CD4-positive, alpha-beta T cell (primary cell): ENCODE measurements at regions of chr1 and their contacts with region 1.

Region 1: GRCh38 chr1:182629499-182630096 is 25.4 kb upstream of the RGS16 start:
- DNase-seq: peak in 12 of 14 experiments; percentile 11 to 82 (median 39)
- ATAC-seq: peak; percentile 88
- H3K4me3 ChIP-seq: no peak overlapping the region
- H3K4me3 Mint-ChIP-seq: no peak overlapping the region
- H3K27ac ChIP-seq: no peak overlapping the region
- H3K27ac Mint-ChIP-seq: peak overlapping the region; percentile 4
- H3K4me1 ChIP-seq: peaks cover 27% of the 10 kb centered on the region
- H3K4me1 Mint-ChIP-seq: peaks cover 51% of the 10 kb centered on the region
- H3K27me3 ChIP-seq: no peaks in the 10 kb centered on the region
- H3K27me3 Mint-ChIP-seq: no peaks in the 10 kb centered on the region
- CTCF ChIP-seq: no peak

Region 2: DNA sequence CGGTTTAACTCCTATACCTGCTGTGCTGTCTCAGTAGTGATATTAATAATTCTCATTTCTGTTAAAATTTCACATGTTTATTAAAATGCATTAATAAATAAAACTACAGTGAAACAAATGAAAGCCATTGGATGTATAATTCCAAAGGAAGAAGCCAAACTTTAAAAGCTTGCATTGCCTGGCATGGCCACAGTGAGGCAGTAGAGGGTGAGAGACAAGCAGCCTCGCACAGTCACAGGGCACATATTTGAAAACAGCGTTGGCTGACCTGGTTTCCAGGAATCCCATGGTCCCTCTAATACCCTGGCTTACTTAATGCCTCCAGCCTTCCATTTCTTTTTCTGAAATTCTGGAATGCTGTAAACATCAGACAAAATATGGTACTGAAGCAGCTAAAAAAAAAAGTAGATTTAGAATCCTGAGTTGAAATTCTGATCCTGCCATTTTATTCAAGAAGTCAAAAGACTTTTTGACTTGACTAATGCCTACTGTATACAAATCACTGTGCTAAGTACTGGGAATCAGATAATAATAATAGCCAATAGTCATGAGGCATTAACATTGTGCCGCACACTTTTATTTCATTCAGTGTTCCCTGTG is 33.9 kb before region 1 on chr1:
- CTCF ChIA-PET with region 1: interaction called, 10 read pairs
- POLR2A ChIA-PET with region 1: no interaction called
- intact Hi-C with region 1: no loop called
- DNase-seq: peak; percentile 37 to 78 (median 57)
- ATAC-seq: peak; percentile 90
- H3K4me3 ChIP-seq: no peak overlapping the region
- H3K4me3 Mint-ChIP-seq: no peak overlapping the region
- H3K27ac ChIP-seq: no peak overlapping the region
- H3K27ac Mint-ChIP-seq: no peak overlapping the region
- H3K4me1 ChIP-seq: peaks cover 1% of the 10 kb centered on the region
- H3K4me1 Mint-ChIP-seq: peaks cover 4% of the 10 kb centered on the region
- H3K27me3 ChIP-seq: no peaks in the 10 kb centered on the region
- H3K27me3 Mint-ChIP-seq: no peaks in the 10 kb centered on the region
- CTCF ChIP-seq: peak; percentile 88

Region 3: GRCh38 chr1:182614796-182615454 is 14.7 kb before region 1 on chr1:
- CTCF ChIA-PET with region 1: interaction called, 11 read pairs
- POLR2A ChIA-PET with region 1: interaction called, 13 read pairs
- intact Hi-C with region 1: loop called in 1 of 2 experiments (anchors 2 kb)
- DNase-seq: peak in 11 of 14 experiments; percentile 17 to 78 (median 43)
- ATAC-seq: no peak
- H3K4me3 ChIP-seq: peak overlapping the region; percentile 57
- H3K4me3 Mint-ChIP-seq: peak overlapping the region; percentile 84
- H3K27ac ChIP-seq: no peak overlapping the region
- H3K27ac Mint-ChIP-seq: peak overlapping the region; percentile 82
- H3K4me1 ChIP-seq: peaks cover 36% of the 10 kb centered on the region
- H3K4me1 Mint-ChIP-seq: peaks cover 32% of the 10 kb centered on the region
- H3K27me3 ChIP-seq: peaks cover 14 to 23% of the 10 kb centered on the region in 2 experiments
- H3K27me3 Mint-ChIP-seq: peaks cover 49% of the 10 kb centered on the region
- CTCF ChIP-seq: no peak

Region 4: GRCh38 chr1:182658055-182658454 is 28.5 kb after region 1 on chr1:
- CTCF ChIA-PET with region 1: no interaction called
- POLR2A ChIA-PET with region 1: no interaction called
- intact Hi-C with region 1: no loop called
- DNase-seq: no peak
- ATAC-seq: no peak
- H3K4me3 ChIP-seq: no peak overlapping the region
- H3K4me3 Mint-ChIP-seq: no peak overlapping the region
- H3K27ac ChIP-seq: no peak overlapping the region
- H3K27ac Mint-ChIP-seq: no peak overlapping the region
- H3K4me1 ChIP-seq: no peaks in the 10 kb centered on the region
- H3K4me1 Mint-ChIP-seq: no peaks in the 10 kb centered on the region
- H3K27me3 ChIP-seq: peaks cover 0 to 3% of the 10 kb centered on the region in 2 experiments
- H3K27me3 Mint-ChIP-seq: peaks cover 8% of the 10 kb centered on the region
- CTCF ChIP-seq: no peak